Activated naive CD4-positive, alpha-beta T cell treated with anti-CD3 and anti-CD28 coated beads for 36 hours (primary cell): ENCODE measurements at regions of chr12 and their contacts with region 1.

Region 1: GRCh38 chr12:65556681-65557437 is 267.4 kb upstream of the HMGA2 start:
- DNase-seq: peak; percentile 79
- H3K4me3 Mint-ChIP-seq: no peak overlapping the region
- H3K27ac Mint-ChIP-seq: no peak overlapping the region
- H3K4me1 Mint-ChIP-seq: no peaks in the 10 kb centered on the region
- H3K27me3 Mint-ChIP-seq: peaks cover 17% of the 10 kb centered on the region

Region 2: DNA sequence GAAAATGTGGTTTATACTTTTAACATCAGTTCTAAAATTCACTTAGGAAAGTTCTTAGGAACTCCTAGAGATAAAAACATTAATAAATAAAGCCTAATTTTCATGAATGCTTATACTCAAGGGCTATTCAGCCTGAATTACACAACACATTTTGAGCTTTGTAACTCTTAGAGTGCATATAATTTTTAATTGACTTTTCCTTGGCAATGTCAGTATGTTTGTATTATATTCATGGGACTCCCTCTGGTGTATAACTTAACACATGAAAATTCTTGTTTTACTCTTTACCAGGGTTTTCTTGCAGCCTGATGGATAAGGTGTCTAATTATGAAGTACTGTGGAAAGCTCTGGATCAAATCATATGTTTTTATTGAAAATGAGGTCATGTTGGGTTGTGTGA is 116.9 kb after region 1 on chr12:
- CTCF ChIA-PET with region 1: interaction called, 3 read pairs
- intact Hi-C with region 1: loop called (anchors 1 kb)
- DNase-seq: no peak
- H3K4me3 Mint-ChIP-seq: no peak overlapping the region
- H3K27ac Mint-ChIP-seq: no peak overlapping the region
- H3K4me1 Mint-ChIP-seq: no peaks in the 10 kb centered on the region
- H3K27me3 Mint-ChIP-seq: peaks cover 37% of the 10 kb centered on the region

Region 3: DNA sequence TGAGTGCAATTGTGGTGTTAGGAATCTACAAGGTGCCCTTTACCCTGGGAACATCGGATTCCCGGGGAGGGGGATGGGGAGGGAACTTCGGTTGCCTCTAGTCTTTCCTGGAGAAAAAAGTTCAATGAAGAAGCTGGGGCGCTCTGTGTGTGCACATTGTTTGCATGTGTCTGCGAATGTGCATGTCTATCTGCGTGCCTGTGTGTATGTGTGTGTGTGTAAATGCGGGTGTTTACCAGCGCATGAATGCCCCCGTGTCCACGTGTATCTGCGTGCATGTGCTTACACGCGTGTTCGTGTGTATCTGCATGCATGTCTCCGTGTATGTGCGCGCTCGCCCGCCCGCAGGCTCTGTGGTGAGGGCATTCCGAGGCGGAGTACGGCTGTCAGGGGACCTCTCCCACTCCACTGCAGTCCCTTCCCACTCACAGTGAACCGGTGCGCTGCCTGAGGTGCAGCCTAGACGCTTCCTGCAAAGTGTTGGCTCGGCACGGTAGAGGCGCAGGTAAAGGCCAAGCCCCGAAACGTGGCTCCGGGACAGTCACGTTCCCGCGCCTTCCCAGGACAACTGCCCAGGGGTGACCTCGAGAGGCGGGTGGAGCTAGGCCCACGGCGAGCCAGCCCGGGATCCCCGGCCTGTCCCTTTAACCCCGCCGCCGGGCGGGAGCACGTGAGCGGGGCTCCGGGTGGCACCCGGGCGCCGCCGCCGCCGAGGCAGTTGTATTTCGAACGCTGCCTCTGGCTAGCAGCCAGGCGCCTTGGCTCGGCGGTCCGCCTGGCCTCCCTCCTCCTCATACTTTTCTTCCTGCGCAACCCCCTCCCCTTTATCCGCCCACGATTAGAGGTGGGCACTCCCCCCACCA is 266.9 kb after region 1 on chr12:
- CTCF ChIA-PET with region 1: no interaction called
- intact Hi-C with region 1: loop called (anchors 10 kb)
- DNase-seq: peak; percentile 7
- H3K4me3 Mint-ChIP-seq: peak overlapping the region; percentile 69
- H3K27ac Mint-ChIP-seq: no peak overlapping the region
- H3K4me1 Mint-ChIP-seq: peaks cover 22% of the 10 kb centered on the region
- H3K27me3 Mint-ChIP-seq: peaks cover 62% of the 10 kb centered on the region

Region 4: GRCh38 chr12:66035288-66035966 is 478.6 kb after region 1 on chr12:
- CTCF ChIA-PET with region 1: no interaction called
- intact Hi-C with region 1: loop called (anchors 1 kb)
- DNase-seq: no peak
- H3K4me3 Mint-ChIP-seq: no peak overlapping the region
- H3K27ac Mint-ChIP-seq: no peak overlapping the region
- H3K4me1 Mint-ChIP-seq: no peaks in the 10 kb centered on the region
- H3K27me3 Mint-ChIP-seq: peaks cover 14% of the 10 kb centered on the region

Region 5: DNA sequence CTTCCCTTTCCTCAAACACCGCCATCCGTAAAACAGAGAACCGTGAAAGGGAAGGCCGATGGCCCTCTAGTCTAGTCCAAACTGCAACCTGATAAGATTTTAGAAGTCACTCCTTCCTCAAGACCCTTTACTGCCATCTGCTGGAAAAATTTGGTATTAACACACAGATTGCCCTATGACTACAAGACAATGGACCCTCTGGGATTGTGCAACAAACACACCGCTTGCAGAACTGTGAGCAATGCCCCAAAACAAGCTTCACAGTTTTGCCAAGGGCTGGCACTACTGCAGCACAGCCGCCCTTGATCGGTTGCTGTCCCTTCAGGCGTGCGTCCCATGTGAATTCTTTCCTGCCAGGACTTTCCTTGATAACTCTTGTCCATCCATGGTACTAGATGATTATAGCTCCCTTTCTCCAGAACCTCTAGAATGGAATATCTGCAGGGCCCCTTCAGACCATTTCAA is 550.6 kb after region 1 on chr12:
- CTCF ChIA-PET with region 1: no interaction called
- intact Hi-C with region 1: loop called (anchors 1 kb)
- DNase-seq: peak; percentile 59
- H3K4me3 Mint-ChIP-seq: no peak overlapping the region
- H3K27ac Mint-ChIP-seq: no peak overlapping the region
- H3K4me1 Mint-ChIP-seq: peaks cover 4% of the 10 kb centered on the region
- H3K27me3 Mint-ChIP-seq: peaks cover 4% of the 10 kb centered on the region